HepG2 (cell line): ENCODE measurements at regions of chr12 and their contacts with region 1.

Region 1: GRCh38 chr12:18224745-18225144 is 36.6 kb upstream of the PIK3C2G start:
- DNase-seq: peak; percentile 21
- ATAC-seq: no peak
- H3K4me3 ChIP-seq: no peak overlapping the region
- H3K27ac ChIP-seq: no peak overlapping the region
- H3K4me1 ChIP-seq: no peaks in the 10 kb centered on the region
- H3K27me3 ChIP-seq: no peaks in the 10 kb centered on the region
- CTCF ChIP-seq: peak; percentile 45
- EP300 ChIP-seq: no peak
- POLR2A ChIP-seq: no peak
- RAD21 ChIP-seq: no peak

Region 2: GRCh38 chr12:18158774-18159557 is 65.8 kb before region 1 on chr12:
- CTCF ChIA-PET with region 1: no interaction called
- POLR2A ChIA-PET with region 1: no interaction called
- in situ Hi-C with region 1: no loop called
- intact Hi-C with region 1: loop called (anchors 1 kb)
- DNase-seq: peak; percentile 35
- ATAC-seq: peak; percentile 77
- H3K4me3 ChIP-seq: no peak overlapping the region
- H3K27ac ChIP-seq: no peak overlapping the region
- H3K4me1 ChIP-seq: no peaks in the 10 kb centered on the region
- H3K27me3 ChIP-seq: no peaks in the 10 kb centered on the region
- CTCF ChIP-seq: peak; percentile 47; the same call in 1 of the 2 replicates
- EP300 ChIP-seq: no peak
- POLR2A ChIP-seq: no peak
- RAD21 ChIP-seq: no peak

Region 3: DNA sequence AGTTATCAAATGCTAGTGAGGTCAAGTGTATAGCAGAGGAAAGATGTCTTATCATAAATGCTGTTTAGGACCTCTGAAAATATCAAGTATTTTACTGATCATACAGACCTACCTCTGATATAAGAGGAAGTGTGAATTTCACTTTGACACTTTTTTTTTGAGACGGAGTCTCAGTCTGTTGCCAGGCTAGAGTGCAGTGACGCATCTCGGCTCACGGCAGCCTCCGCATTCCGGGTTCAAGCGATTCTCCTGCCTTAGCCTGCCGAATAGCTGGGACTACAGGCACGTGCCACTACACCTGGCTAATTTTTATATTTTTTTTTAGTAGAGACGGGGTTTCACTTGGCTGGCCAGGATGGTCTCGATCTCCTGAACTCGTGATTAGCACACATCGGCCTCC is 18.5 kb before region 1 on chr12:
- CTCF ChIA-PET with region 1: no interaction called
- POLR2A ChIA-PET with region 1: no interaction called
- in situ Hi-C with region 1: no loop called
- intact Hi-C with region 1: no loop called
- DNase-seq: no peak
- ATAC-seq: no peak
- H3K4me3 ChIP-seq: no peak overlapping the region
- H3K27ac ChIP-seq: no peak overlapping the region
- H3K4me1 ChIP-seq: no peaks in the 10 kb centered on the region
- H3K27me3 ChIP-seq: no peaks in the 10 kb centered on the region
- CTCF ChIP-seq: no peak
- EP300 ChIP-seq: no peak
- POLR2A ChIP-seq: no peak
- RAD21 ChIP-seq: no peak

Region 4: DNA sequence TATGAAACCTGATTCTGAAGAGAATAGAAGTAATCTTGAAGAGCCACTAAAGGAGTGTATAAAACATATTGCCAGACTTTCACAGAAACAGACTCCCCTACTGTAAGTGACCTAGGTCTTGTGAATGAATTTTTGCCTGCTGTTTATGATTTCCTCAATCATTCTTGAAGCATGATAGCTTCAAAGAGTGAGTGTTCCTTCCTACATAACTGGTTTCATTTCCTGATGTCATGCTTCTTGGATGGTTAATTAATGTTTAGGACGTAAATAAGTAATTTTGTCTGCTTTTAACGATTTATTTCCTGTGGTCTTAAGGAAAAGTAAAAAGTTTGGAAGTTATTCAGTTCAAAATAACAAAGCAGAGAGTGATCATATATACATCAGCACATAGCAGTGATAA is 166.4 kb after region 1 on chr12:
- CTCF ChIA-PET with region 1: no interaction called
- POLR2A ChIA-PET with region 1: no interaction called
- in situ Hi-C with region 1: no loop called
- intact Hi-C with region 1: no loop called
- DNase-seq: no peak
- ATAC-seq: no peak
- H3K4me3 ChIP-seq: no peak overlapping the region
- H3K27ac ChIP-seq: no peak overlapping the region
- H3K4me1 ChIP-seq: no peaks in the 10 kb centered on the region
- H3K27me3 ChIP-seq: no peaks in the 10 kb centered on the region
- CTCF ChIP-seq: no peak
- EP300 ChIP-seq: no peak
- POLR2A ChIP-seq: no peak
- RAD21 ChIP-seq: no peak